AG04449 (cell line): ENCODE measurements at regions of chr16 and their contacts with region 1.

Region 1: GRCh38 chr16:73878611-73879010 is 418.0 kb upstream of the PSMD7 start:
- DNase-seq: peak; percentile 40
- H3K4me3 ChIP-seq: no peak overlapping the region
- CTCF ChIP-seq: peak; percentile 52

Region 2: GRCh38 chr16:72501739-72502593 is 1376.6 kb before region 1 on chr16:
- CTCF ChIA-PET with region 1: interaction called, 34 read pairs
- POLR2A ChIA-PET with region 1: no interaction called
- DNase-seq: peak; percentile 19
- H3K4me3 ChIP-seq: no peak overlapping the region
- CTCF ChIP-seq: peak; percentile 82

Region 3: DNA sequence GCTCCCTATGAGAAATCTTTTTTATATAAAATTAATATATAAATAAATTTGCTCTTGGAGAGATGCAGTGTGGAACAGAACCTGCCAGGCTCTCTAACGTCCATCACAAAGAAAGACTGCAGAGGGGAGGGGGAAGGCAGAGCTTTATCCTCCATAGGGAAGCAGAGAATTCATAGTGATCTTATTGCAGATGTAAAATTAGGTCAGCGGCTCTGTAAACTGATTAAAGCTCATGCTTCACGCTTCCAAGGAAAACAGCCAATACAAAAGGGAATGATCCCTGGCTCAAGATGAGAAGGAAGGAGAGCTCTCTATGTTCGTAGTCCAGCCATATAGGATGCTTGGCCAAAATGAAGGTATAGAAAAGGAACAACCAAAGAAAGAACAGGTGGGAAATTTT is 114.3 kb before region 1 on chr16:
- CTCF ChIA-PET with region 1: no interaction called
- POLR2A ChIA-PET with region 1: no interaction called
- DNase-seq: no peak
- H3K4me3 ChIP-seq: no peak overlapping the region
- CTCF ChIP-seq: no peak